ENCODE measurements at regions of chr18 and their contacts with region 1.

Region 1: GRCh38 chr18:23412351-23412964 is 40.6 kb upstream of the RIOK3 start:
- DNase-seq: no peak
- ATAC-seq: no peak
- H3K4me3 Mint-ChIP-seq: no peak overlapping the region
- H3K27ac Mint-ChIP-seq: no peak overlapping the region
- H3K4me1 Mint-ChIP-seq: peaks cover 3% of the 10 kb centered on the region
- H3K27me3 Mint-ChIP-seq: no peaks in the 10 kb centered on the region

Region 2: DNA sequence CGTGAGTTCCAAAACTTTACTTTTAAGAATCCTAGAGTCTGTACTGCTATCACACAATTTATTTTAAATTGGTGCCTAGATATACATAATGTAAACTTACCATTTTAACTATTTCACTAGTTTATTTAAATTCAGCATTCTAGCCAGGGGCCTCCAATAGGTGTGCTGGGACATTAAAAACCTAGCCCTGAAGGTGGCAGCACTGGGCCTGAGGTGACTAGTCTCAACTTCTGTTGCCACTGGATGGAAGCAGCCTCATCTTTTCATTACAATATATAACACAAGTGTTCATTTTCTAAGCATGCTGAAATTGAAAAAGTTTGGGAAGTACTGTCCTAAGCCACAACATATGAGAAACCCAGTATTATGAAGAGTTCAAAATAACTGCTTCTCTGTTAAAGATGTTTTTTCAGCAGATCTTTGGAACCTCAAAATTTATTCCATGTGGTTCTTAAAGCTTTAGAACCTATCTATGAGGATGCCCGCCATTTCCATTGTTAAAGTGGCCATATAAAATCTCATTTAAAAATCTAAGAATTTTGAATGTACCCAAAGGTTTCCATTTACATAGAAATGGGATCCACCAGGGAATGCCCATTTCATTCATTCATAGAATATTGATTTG is 482.3 kb before region 1 on chr18:
- CTCF ChIA-PET with region 1: interaction called, 12 read pairs
- POLR2A ChIA-PET with region 1: no interaction called
- DNase-seq: peak; percentile 91
- ATAC-seq: peak; percentile 35
- H3K4me3 Mint-ChIP-seq: no peak overlapping the region
- H3K27ac Mint-ChIP-seq: no peak overlapping the region
- H3K4me1 Mint-ChIP-seq: peaks cover 22% of the 10 kb centered on the region
- H3K27me3 Mint-ChIP-seq: peaks cover 3% of the 10 kb centered on the region

Region 3: GRCh38 chr18:23032030-23032582 is 380.4 kb before region 1 on chr18:
- CTCF ChIA-PET with region 1: interaction called, 26 read pairs
- POLR2A ChIA-PET with region 1: no interaction called
- DNase-seq: no peak
- ATAC-seq: no peak
- H3K4me3 Mint-ChIP-seq: no peak overlapping the region
- H3K27ac Mint-ChIP-seq: no peak overlapping the region
- H3K4me1 Mint-ChIP-seq: peaks cover 5% of the 10 kb centered on the region
- H3K27me3 Mint-ChIP-seq: no peaks in the 10 kb centered on the region

Region 4: GRCh38 chr18:23131693-23132319 is 280.7 kb before region 1 on chr18:
- CTCF ChIA-PET with region 1: interaction called, 27 read pairs
- POLR2A ChIA-PET with region 1: no interaction called
- DNase-seq: peak; percentile 82
- ATAC-seq: no peak
- H3K4me3 Mint-ChIP-seq: no peak overlapping the region
- H3K27ac Mint-ChIP-seq: no peak overlapping the region
- H3K4me1 Mint-ChIP-seq: peaks cover 29% of the 10 kb centered on the region
- H3K27me3 Mint-ChIP-seq: peaks cover 13% of the 10 kb centered on the region

Region 5: DNA sequence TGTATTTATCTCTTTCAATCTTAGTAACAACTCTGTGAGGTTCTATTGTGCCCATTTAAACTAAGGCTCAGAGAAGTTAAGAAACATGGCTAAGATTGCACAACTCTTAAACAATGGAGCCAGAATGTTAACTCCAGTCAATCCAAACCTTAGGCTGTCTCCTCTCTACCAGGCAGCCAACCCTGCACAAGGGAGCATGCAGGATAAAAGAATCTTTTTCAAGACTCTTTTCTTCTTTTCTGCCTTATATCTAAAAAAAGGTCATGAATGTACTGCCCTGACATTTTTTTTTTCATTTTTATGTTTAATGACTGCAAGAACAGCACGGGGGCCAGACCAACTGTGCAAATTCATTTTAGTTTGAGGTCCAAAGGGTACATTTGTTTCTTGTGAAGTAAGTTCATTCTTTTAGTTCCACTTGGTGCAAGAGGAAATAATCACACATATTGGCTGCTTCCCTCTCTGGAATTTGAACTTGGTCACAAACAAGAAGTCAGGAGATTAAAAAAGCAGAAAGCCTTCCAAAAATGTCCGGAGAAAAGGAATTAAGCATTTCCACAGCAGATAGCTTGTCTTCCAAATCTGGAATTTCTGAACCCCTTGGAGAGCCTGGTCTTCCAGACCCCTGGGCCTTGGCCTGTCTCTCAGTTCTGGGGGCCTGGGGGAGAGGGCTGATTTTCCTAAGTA is 55.4 kb before region 1 on chr18:
- CTCF ChIA-PET with region 1: interaction called, 17 read pairs
- POLR2A ChIA-PET with region 1: no interaction called
- DNase-seq: no peak
- ATAC-seq: no peak
- H3K4me3 Mint-ChIP-seq: no peak overlapping the region
- H3K27ac Mint-ChIP-seq: peak overlapping the region; percentile 94
- H3K4me1 Mint-ChIP-seq: peaks cover 33% of the 10 kb centered on the region
- H3K27me3 Mint-ChIP-seq: no peaks in the 10 kb centered on the region

Region 6: DNA sequence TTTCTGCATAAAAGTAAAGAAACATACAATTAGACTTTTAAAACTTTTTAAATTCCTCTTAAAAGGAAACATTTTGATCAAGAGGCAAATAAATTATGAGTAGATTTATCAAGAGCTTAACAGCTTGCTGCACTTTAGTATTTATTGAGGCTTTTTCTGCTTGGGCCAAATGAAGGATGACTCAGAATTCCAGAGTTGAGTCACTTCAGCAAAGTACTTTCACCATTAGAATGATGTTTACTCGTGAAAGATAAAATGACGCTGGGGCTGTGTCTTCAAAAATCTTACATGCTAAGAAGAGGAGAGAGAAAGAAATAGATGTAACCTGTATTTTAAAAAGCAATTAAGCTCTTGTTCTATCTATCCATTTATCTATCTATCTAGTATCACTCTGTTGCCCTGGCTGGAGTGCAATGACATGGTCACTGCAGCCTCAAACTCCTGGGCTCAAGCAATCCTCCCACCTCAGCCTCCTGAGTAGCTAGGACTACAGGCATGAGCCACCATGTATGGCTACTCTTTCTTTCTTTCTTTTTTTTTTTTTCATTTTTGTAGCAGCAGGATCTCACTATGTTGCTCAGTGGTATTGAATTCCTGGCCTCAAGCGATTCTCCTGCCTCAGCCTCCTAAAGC is 34.7 kb before region 1 on chr18:
- CTCF ChIA-PET with region 1: interaction called, 12 read pairs
- POLR2A ChIA-PET with region 1: no interaction called
- DNase-seq: no peak
- ATAC-seq: no peak
- H3K4me3 Mint-ChIP-seq: no peak overlapping the region
- H3K27ac Mint-ChIP-seq: no peak overlapping the region
- H3K4me1 Mint-ChIP-seq: peaks cover 12% of the 10 kb centered on the region
- H3K27me3 Mint-ChIP-seq: no peaks in the 10 kb centered on the region

Region 7: DNA sequence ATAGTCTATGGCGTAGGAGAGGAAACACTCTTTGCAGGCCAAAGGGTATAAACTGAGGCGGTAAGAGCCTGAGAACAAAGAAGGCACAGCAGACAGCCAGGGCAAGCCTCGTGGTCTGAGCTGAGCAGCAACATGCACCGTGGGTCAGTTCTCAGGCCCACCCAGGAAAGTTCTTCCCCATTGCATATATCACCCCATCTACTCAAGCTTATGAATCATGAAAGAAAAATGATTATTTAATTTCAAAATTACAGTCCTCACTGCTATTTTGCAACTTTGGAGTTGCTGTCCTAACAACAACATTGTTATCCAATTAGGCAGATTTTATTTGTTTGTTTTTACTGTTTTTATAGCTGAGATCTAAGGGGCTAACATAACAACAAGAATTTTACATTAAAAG is 14.1 kb before region 1 on chr18:
- CTCF ChIA-PET with region 1: interaction called, 33 read pairs
- POLR2A ChIA-PET with region 1: no interaction called
- DNase-seq: no peak
- ATAC-seq: no peak
- H3K4me3 Mint-ChIP-seq: no peak overlapping the region
- H3K27ac Mint-ChIP-seq: peak overlapping the region; percentile 11
- H3K4me1 Mint-ChIP-seq: peaks cover 15% of the 10 kb centered on the region
- H3K27me3 Mint-ChIP-seq: no peaks in the 10 kb centered on the region

Region 8: DNA sequence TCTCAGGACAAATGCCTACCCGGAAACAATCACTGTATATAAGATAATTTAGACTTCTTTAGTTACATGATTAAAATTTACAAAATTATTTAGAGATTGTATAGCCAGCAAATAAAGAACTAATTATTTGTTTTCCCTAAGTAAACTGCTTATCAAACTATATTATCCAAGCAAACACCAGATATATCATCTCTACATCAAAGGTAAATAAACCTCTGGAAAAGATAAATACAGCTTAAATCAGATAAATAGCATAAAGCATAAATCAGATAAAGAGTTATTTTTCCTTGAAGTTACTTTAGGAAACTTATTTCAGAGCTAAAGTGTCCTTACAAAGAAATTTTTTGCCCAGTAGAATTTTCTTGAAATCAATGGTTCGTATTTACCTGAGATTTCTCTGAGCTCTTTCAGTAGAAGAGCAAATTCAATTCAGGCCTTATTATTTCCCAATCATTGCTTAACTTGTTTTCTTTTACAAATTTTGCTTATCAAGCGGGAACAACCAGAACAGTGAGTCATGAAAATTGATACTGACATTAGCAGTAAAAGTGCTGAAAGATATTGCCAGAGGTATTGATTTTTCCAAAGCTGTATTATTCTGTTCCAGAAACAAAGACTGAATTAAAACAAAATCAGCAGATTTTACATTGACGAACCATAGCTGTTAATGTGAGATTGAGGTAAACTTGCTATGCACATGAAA is 30.3 kb after region 1 on chr18:
- CTCF ChIA-PET with region 1: no interaction called
- POLR2A ChIA-PET with region 1: no interaction called
- DNase-seq: no peak
- ATAC-seq: no peak
- H3K4me3 Mint-ChIP-seq: no peak overlapping the region
- H3K27ac Mint-ChIP-seq: no peak overlapping the region
- H3K4me1 Mint-ChIP-seq: peaks cover 8% of the 10 kb centered on the region
- H3K27me3 Mint-ChIP-seq: peaks cover 13% of the 10 kb centered on the region

Region 9: GRCh38 chr18:23468753-23469459 is 56.4 kb after region 1 on chr18:
- CTCF ChIA-PET with region 1: no interaction called
- POLR2A ChIA-PET with region 1: no interaction called
- DNase-seq: no peak
- ATAC-seq: no peak
- H3K4me3 Mint-ChIP-seq: no peak overlapping the region
- H3K27ac Mint-ChIP-seq: no peak overlapping the region
- H3K4me1 Mint-ChIP-seq: no peaks in the 10 kb centered on the region
- H3K27me3 Mint-ChIP-seq: no peaks in the 10 kb centered on the region

Measured in activated CD8-positive, alpha-beta T cell treated with anti-CD3 and anti-CD28 coated beads, Interleukin-2, amount 10 ng/mL, durations not matched to agents 7 days and 5 days (primary cell).